ENCODE measurements at regions of chr5 and their contacts with region 1.

Region 1: GRCh38 chr5:40904205-40904993 is 4.9 kb upstream of the C7 start:
- DNase-seq: peak; percentile 49
- H3K4me3 ChIP-seq: no peak overlapping the region
- H3K27ac ChIP-seq: no peak overlapping the region
- H3K4me1 ChIP-seq: peaks cover 9% of the 10 kb centered on the region
- H3K27me3 ChIP-seq: no peaks in the 10 kb centered on the region
- CTCF ChIP-seq: peak; percentile 99 to 100

Region 2: GRCh38 chr5:41118177-41118576 is 213.8 kb after region 1 on chr5:
- CTCF ChIA-PET with region 1: no interaction called
- dilution Hi-C with region 1: no loop called
- in situ Hi-C with region 1: no loop called
- intact Hi-C with region 1: loop called (anchors 1 kb)
- DNase-seq: no peak
- H3K4me3 ChIP-seq: no peak overlapping the region
- H3K27ac ChIP-seq: no peak overlapping the region
- H3K4me1 ChIP-seq: no peaks in the 10 kb centered on the region
- H3K27me3 ChIP-seq: no peaks in the 10 kb centered on the region
- CTCF ChIP-seq: no peak

Region 3: DNA sequence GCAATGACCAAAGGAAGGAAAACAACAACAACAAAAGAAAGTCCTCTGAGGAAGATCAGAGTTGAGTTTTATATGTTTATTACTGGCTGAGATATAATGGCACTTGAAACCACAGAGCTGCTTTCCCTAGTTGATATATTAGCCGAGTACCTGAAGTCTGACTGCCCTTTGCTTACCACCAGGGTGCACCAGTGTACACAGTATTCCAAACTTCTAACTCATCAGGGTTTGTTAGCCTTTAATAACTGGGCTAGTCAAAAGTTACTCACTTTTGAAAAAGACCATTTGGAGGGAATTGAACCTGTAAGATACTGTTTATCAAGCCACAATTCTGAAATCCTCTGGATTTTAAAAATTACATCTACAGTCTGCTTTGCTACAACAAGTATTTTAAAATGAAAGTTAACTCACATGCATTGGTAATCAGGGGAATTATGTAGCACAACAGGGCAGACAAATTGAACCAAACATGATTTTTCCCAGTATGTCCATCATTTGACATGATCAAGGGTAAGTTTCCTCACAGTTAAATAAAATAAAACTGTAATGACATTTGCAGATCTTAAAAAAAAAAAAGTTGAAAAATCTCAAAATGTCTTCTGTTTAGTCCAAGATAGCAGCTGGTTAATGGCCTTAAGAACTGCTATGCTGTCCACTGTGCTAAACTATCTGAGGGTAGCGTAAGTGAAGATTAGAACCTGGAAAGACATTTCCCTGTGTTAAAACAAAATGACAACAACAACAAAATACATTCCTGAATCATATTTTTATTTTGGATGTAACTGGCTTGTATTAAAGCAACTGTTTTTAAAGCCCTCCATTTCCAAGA is 366.2 kb after region 1 on chr5:
- CTCF ChIA-PET with region 1: interaction called, 14 read pairs
- dilution Hi-C with region 1: no loop called
- in situ Hi-C with region 1: no loop called
- intact Hi-C with region 1: loop called (anchors 1 kb)
- DNase-seq: peak; percentile 34
- H3K4me3 ChIP-seq: no peak overlapping the region
- H3K27ac ChIP-seq: no peak overlapping the region
- H3K4me1 ChIP-seq: no peaks in the 10 kb centered on the region
- H3K27me3 ChIP-seq: no peaks in the 10 kb centered on the region
- CTCF ChIP-seq: peak; percentile 68 to 83

Region 4: GRCh38 chr5:41346609-41347008 is 442.2 kb after region 1 on chr5:
- CTCF ChIA-PET with region 1: no interaction called
- dilution Hi-C with region 1: no loop called
- in situ Hi-C with region 1: no loop called
- intact Hi-C with region 1: loop called (anchors 2 kb)
- DNase-seq: no peak
- H3K4me3 ChIP-seq: no peak overlapping the region
- H3K27ac ChIP-seq: no peak overlapping the region
- H3K4me1 ChIP-seq: no peaks in the 10 kb centered on the region
- H3K27me3 ChIP-seq: peaks cover 1% of the 10 kb centered on the region
- CTCF ChIP-seq: peak in 1 of 2 donors; percentile 25

Region 5: DNA sequence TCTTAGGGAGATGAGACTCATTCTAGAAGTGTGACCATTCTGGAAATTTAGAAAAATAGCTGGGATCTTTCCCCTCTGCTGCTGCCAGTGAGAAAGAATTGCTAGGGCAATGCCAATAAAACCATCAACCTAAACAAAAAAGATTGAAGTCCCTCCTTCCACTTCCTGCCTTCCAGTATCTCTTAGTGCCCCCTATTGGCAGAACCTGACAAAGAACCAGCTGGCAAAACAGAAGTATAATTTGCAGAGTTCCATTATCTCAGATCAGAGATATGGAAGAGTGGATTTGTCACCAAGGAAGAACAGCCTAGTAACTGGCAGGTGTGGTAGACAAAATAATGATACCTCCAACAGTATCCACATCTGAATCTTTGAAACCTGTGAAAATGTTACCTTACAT is 619.8 kb after region 1 on chr5:
- CTCF ChIA-PET with region 1: no interaction called
- dilution Hi-C with region 1: no loop called
- in situ Hi-C with region 1: no loop called
- intact Hi-C with region 1: loop called (anchors 1 kb)
- DNase-seq: no peak
- H3K4me3 ChIP-seq: no peak overlapping the region
- H3K27ac ChIP-seq: no peak overlapping the region
- H3K4me1 ChIP-seq: peaks cover 8% of the 10 kb centered on the region
- H3K27me3 ChIP-seq: no peaks in the 10 kb centered on the region
- CTCF ChIP-seq: peak; percentile 19 to 44

Region 6: DNA sequence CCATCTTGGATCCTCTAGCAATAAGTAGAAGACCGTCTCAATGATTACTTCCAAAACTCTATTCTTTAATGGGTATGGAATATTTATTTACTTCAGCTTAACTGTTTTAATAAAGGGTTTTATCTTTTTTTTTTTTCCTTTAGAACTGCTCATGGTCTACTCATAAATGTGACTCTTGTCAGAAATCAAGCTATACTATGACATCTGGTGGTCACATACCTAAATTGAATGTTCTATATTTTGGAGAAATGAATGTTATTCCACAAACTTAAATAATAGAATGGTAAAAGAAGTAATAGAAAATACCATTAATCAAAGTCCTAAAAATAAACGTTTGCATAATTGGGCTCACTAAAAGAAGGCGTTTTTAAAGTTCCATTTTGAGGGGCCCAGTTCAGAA is 737.2 kb after region 1 on chr5:
- CTCF ChIA-PET with region 1: no interaction called
- dilution Hi-C with region 1: no loop called
- in situ Hi-C with region 1: no loop called
- intact Hi-C with region 1: loop called (anchors 1 kb)
- DNase-seq: no peak
- H3K4me3 ChIP-seq: no peak overlapping the region
- H3K27ac ChIP-seq: no peak overlapping the region
- H3K4me1 ChIP-seq: no peaks in the 10 kb centered on the region
- H3K27me3 ChIP-seq: no peaks in the 10 kb centered on the region
- CTCF ChIP-seq: peak in 1 of 2 donors; percentile 21

Region 7: GRCh38 chr5:41843456-41844370 is 939.3 kb after region 1 on chr5:
- CTCF ChIA-PET with region 1: interaction called, 3 read pairs
- dilution Hi-C with region 1: no loop called
- in situ Hi-C with region 1: no loop called
- intact Hi-C with region 1: loop called (anchors 10 kb)
- DNase-seq: peak; percentile 37
- H3K4me3 ChIP-seq: no peak overlapping the region
- H3K27ac ChIP-seq: no peak overlapping the region
- H3K4me1 ChIP-seq: no peaks in the 10 kb centered on the region
- H3K27me3 ChIP-seq: no peaks in the 10 kb centered on the region
- CTCF ChIP-seq: peak; percentile 69 to 79